ENCODE measurements at regions of chr1 and their contacts with region 1.

Region 1: DNA sequence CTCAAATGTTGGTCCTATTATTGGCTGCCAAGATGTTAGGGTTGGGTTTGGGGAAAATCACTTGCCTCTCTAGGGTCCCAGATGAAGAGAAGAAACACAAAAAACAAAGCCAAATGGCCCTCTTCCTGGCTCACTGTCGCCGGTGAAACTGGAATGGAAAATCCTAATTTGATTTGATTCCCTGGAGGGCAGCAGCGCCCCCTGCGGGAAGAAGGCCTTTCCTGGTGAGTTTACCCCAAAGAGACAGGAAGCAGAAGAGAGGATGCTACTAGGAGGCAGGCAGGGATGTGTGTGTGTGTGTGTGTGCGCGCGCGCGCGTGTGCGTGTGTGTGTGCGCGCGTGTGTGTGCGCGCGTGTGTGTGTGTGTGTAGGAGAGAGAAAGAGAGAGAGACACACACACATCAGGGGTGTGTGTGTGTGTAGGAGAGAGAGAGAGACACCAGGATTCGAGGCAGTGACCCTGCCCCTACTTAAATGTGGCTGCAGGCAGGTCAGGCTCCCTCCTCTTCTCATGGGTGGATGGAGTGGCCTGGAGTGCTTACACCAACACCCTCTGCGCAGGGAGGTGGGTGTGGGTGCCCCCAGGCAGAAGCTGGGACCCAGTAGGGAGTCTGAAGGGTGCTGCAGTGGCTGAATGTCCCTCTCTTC is 3.1 kb upstream of the SELENON start:
- DNase-seq: peak; percentile 87
- H3K4me3 ChIP-seq: no peak overlapping the region
- H3K27ac ChIP-seq: peak overlapping the region; percentile 71 to 75
- H3K4me1 ChIP-seq: peaks cover 20% of the 10 kb centered on the region
- H3K27me3 ChIP-seq: no peaks in the 10 kb centered on the region
- CTCF ChIP-seq: peak; percentile 65 to 95 (median 86)
- POLR2A ChIP-seq: no peak

Region 2: DNA sequence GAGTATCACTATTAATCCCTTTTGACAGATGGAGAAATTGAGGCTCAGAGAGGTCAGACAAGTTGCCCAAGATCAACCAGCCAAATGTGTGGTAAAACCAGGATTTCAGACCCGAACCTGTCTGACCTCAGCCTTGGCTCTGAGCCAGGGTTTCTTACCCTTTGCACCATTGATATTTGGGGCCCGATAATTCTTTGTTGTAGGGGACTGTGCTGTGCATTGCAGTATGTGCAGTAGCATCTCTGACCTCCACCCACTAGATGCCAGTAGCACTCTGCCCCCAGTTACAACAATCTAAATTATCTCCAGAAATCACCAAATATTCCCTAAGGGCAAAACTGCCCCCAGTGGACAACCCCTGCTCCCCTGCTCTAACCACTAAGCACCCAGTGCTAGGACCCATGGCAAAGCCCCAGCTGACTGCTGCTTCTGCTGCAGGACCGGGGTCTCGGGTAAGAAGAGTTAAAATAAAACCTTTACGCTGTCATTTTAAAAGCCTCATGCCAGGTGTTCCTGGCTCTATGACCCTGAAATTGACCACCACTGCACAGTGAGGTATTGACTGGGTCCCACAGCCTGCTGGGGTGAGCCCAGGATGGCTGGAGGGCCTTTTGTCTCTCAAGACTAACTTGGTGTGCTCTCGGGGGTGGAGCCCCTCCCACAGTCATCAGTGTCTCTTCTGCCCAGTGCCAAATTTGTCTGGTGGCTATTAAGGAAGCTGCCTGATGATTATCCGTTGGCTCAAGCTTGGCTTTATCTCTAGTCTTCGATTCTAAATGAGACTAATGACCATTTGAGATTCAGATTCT is 185.9 kb before region 1 on chr1:
- intact Hi-C with region 1: loop called (anchors 2 kb)
- DNase-seq: no peak
- H3K4me3 ChIP-seq: no peak overlapping the region
- H3K27ac ChIP-seq: no peak overlapping the region
- H3K4me1 ChIP-seq: peaks cover 5% of the 10 kb centered on the region
- H3K27me3 ChIP-seq: no peaks in the 10 kb centered on the region
- CTCF ChIP-seq: peak in 1 of 4 experiments; percentile 22
- POLR2A ChIP-seq: no peak

Region 3: DNA sequence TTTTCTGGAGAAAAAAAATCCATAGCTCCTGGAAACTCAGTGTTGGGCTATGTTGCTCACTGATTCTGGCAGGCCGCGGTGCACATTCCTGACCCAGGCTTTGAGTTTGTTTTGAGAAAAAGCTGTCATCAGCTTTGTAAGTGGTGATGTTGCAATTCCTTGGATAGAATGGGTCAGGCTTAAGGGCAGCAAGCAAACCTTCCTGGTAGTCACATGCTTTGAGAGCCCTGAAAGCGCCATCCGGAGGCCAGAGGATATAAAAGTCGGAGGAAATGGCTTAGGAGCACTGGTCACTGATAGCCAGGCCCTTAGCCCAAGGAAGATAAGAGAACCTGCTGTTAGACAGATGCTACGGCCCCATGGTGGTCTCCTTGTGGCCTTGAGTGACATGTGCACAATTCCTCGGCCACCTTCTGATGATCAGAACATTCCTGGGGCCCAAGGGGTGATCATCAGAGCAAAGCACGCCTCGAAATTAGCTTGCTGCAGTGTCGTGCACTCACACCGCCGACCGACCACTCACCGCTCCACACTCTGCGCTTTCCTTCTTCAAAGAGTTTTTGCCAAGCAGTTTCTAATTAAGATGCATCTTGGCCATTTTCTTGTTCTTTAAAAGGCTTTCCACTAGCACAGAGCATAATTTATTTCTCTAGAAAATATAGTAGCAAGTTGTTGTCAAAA is 101.7 kb before region 1 on chr1:
- intact Hi-C with region 1: loop called (anchors 10 kb)
- DNase-seq: peak; percentile 50
- H3K4me3 ChIP-seq: no peak overlapping the region
- H3K27ac ChIP-seq: peak overlapping the region; percentile 31 to 64
- H3K4me1 ChIP-seq: peaks cover 3% of the 10 kb centered on the region
- H3K27me3 ChIP-seq: no peaks in the 10 kb centered on the region
- CTCF ChIP-seq: no peak
- POLR2A ChIP-seq: no peak

Region 4: GRCh38 chr1:25743826-25744581 is 52.9 kb before region 1 on chr1:
- intact Hi-C with region 1: loop called (anchors 5 kb)
- DNase-seq: peak; percentile 73
- H3K4me3 ChIP-seq: no peak overlapping the region
- H3K27ac ChIP-seq: peak overlapping the region; percentile 71 to 82
- H3K4me1 ChIP-seq: peaks cover 20% of the 10 kb centered on the region
- H3K27me3 ChIP-seq: no peaks in the 10 kb centered on the region
- CTCF ChIP-seq: peak in 3 of 4 experiments; percentile 56 to 71 (median 69)
- POLR2A ChIP-seq: no peak

Region 5: DNA sequence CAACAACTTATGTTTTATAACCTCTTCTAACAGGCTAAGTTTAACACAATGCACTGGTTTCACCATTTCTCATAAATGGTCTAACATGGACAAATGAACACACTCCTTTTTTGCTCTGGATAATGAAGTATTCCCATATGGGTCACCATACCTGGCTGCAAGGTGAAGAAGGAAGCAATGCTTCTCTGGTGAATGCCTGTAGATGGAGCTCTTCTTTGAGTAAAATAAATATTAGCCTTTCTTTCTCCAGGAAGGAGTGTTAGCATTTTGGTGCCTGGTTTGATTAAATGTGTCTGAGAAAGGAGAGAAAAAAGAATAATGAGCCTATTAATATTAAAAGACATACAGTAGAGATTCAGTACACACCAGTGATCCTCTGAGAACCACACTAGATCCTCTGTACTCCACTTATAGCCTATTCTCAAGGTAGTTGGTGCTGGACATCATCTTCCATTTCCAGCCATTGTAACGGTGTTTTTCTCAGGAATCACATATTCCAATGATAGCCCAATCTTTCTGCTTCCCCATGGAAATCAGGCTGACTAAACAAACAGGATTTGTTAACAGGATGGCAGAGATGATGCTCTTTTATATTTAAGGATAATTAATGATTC is 40.4 kb after region 1 on chr1:
- intact Hi-C with region 1: no loop called
- DNase-seq: no peak
- H3K4me3 ChIP-seq: no peak overlapping the region
- H3K27ac ChIP-seq: peak overlapping the region; percentile 39 to 41
- H3K4me1 ChIP-seq: peaks cover 10% of the 10 kb centered on the region
- H3K27me3 ChIP-seq: no peaks in the 10 kb centered on the region
- CTCF ChIP-seq: peak in 3 of 4 experiments; percentile 33 to 69 (median 60)
- POLR2A ChIP-seq: no peak

Region 6: DNA sequence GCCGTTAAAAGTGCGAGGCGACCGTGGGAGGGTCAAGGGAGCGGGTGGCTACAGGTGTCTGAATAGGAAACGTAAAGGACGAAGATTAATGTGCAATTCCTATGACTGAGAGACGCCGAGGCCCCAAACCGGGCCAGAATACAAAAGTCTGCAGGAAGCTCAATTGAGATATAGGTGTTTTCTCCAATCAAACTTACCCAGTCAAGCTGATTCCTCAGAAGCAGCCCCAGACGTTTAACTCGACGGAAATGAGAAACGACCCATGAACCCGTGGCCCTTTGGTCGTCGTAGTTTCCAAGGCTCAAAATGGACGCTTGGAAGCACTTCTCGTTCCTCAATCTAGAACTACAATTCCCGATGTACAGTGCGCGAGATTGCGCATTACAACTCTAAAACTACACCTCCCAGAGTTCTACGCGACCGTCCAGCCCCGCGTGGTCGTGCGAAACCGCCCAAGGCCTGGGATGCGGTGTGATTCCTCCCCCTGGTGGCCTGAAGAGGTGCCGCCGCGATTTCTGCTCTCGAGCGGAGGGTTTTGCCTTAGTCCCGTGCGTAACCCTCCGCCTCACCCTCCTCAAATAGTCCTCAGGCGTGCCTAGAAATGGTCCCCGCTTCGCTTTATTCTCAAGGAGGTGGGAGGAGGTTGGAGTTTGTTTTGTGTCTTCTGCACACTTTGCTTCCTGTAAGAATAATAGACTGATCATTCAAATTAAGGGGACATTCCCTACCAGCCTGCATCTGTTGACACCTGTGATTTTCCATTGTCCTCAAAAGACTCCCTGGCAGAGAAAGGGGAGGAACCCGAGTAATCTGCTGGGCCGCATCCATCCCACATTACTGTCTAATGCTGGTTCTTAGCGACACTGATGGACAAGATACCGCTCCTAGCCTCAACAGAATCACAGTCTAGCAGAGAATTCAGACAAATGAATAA is 201.2 kb after region 1 on chr1 and contains the start of gene PAFAH2:
- intact Hi-C with region 1: loop called (anchors 5 kb)
- DNase-seq: peak; percentile 98
- H3K4me3 ChIP-seq: peak within 1 kb of the TSS; percentile 45 to 59
- H3K27ac ChIP-seq: peak within 1 kb of the TSS; percentile 75 to 79
- H3K4me1 ChIP-seq: no peaks in the 10 kb centered on the region
- H3K27me3 ChIP-seq: no peaks in the 10 kb centered on the region
- CTCF ChIP-seq: peak; percentile 94 to 100 (median 100)
- POLR2A ChIP-seq: peak; percentile 57
- total RNA-seq, gene PAFAH2: 17.4 to 18.7 TPM

Measured in prostate gland (tissue), 2 donors.